ENCODE measurements at regions of chr4 and their contacts with region 1.

Region 1: GRCh38 chr4:16237715-16238114 is 11.4 kb upstream of the TAPT1 start:
- DNase-seq: no peak
- H3K4me3 Mint-ChIP-seq: no peak overlapping the region
- H3K27ac Mint-ChIP-seq: no peak overlapping the region
- H3K4me1 Mint-ChIP-seq: no peaks in the 10 kb centered on the region
- H3K27me3 Mint-ChIP-seq: peaks cover 8% of the 10 kb centered on the region

Region 2: GRCh38 chr4:15794905-15795304 is 442.8 kb before region 1 on chr4:
- intact Hi-C with region 1: loop called (anchors 10 kb)
- DNase-seq: no peak
- H3K4me3 Mint-ChIP-seq: peak overlapping the region; percentile 39
- H3K27ac Mint-ChIP-seq: peak overlapping the region; percentile 89
- H3K4me1 Mint-ChIP-seq: peaks cover 61% of the 10 kb centered on the region
- H3K27me3 Mint-ChIP-seq: no peaks in the 10 kb centered on the region

Region 3: GRCh38 chr4:16225863-16226815 is 11.6 kb before region 1 on chr4 and contains the start of gene TAPT1:
- intact Hi-C with region 1: loop called (anchors 1 kb)
- DNase-seq: peak; percentile 74
- H3K4me3 Mint-ChIP-seq: peak within 1 kb of the TSS; percentile 95
- H3K27ac Mint-ChIP-seq: peak within 1 kb of the TSS; percentile 98
- H3K4me1 Mint-ChIP-seq: peaks cover 48% of the 10 kb centered on the region
- H3K27me3 Mint-ChIP-seq: no peaks in the 10 kb centered on the region
- total RNA-seq, gene TAPT1: 28.1 and 32.9 TPM in 2 replicates

Region 4: GRCh38 chr4:16322183-16322582 is 84.5 kb after region 1 on chr4:
- intact Hi-C with region 1: no loop called
- DNase-seq: no peak
- H3K4me3 Mint-ChIP-seq: no peak overlapping the region
- H3K27ac Mint-ChIP-seq: no peak overlapping the region
- H3K4me1 Mint-ChIP-seq: no peaks in the 10 kb centered on the region
- H3K27me3 Mint-ChIP-seq: peaks cover 2% of the 10 kb centered on the region

Region 5: GRCh38 chr4:16418814-16419213 is 181.1 kb after region 1 on chr4:
- intact Hi-C with region 1: no loop called
- DNase-seq: no peak
- H3K4me3 Mint-ChIP-seq: no peak overlapping the region
- H3K27ac Mint-ChIP-seq: no peak overlapping the region
- H3K4me1 Mint-ChIP-seq: peaks cover 2% of the 10 kb centered on the region
- H3K27me3 Mint-ChIP-seq: no peaks in the 10 kb centered on the region

Measured in activated T-helper 2 cell treated with anti-CD3 and anti-CD28 coated beads, Interferon-gamma antibody, Interleukin-2, Interleukin-4, amounts not matched to agents 10 μg/mL and 5 μg/mL and 100 μg/mL, durations not matched to agents 14 hours and 24 hours and 36 hours (primary cell).